CD4-positive, alpha-beta memory T cell (primary cell): ENCODE measurements at regions of chr4 and their contacts with region 1.

Region 1: DNA sequence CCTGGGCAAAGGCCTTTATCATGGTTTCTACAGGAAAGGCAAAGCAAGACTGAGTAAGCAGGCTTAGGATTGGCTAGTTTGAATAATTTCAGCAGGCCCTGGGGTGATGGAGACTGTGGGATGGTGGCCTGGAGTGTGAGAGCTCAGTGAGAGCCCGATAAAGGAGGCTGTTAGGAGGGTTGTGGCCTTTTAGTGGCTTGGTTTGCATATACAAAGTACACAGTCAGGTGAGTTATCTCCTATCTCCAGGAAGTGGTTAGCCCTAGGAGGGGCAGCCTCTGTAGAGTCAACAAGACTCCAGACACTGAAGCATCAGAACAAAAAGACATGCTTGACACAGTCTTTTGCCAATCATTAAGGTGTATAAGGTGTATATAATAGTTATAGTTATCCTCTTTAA is 157.2 kb downstream of the CFAP299 start:
- DNase-seq: peak; percentile 76 to 83 (median 81)
- H3K4me3 ChIP-seq: no peak overlapping the region
- H3K4me3 Mint-ChIP-seq: peak overlapping the region in 7 of 8 donors; percentile 33 to 79 (median 69)
- H3K27ac ChIP-seq: peak overlapping the region; percentile 24
- H3K27ac Mint-ChIP-seq: peak overlapping the region; percentile 82 to 95 (median 92)
- H3K4me1 ChIP-seq: peaks cover 58% of the 10 kb centered on the region
- H3K4me1 Mint-ChIP-seq: peaks cover 45 to 66% (median 56%) of the 10 kb centered on the region in 4 donors
- H3K27me3 ChIP-seq: no peaks in the 10 kb centered on the region
- H3K27me3 Mint-ChIP-seq: no peaks in the 10 kb centered on the region

Region 2: GRCh38 chr4:80422727-80423404 is 69.9 kb before region 1 on chr4:
- CTCF ChIA-PET with region 1: no interaction called
- POLR2A ChIA-PET with region 1: no interaction called
- intact Hi-C with region 1: loop called (anchors 10 kb)
- DNase-seq: peak; percentile 16 to 57 (median 44)
- H3K4me3 ChIP-seq: no peak overlapping the region
- H3K4me3 Mint-ChIP-seq: no peak overlapping the region
- H3K27ac ChIP-seq: no peak overlapping the region
- H3K27ac Mint-ChIP-seq: no peak overlapping the region
- H3K4me1 ChIP-seq: peaks cover 18% of the 10 kb centered on the region
- H3K4me1 Mint-ChIP-seq: peaks cover 12 to 21% (median 17%) of the 10 kb centered on the region in 4 donors
- H3K27me3 ChIP-seq: no peaks in the 10 kb centered on the region
- H3K27me3 Mint-ChIP-seq: no peaks in the 10 kb centered on the region

Region 3: GRCh38 chr4:80434238-80434637 is 58.5 kb before region 1 on chr4:
- CTCF ChIA-PET with region 1: interaction called, 3 read pairs
- POLR2A ChIA-PET with region 1: interaction called, 10 read pairs
- intact Hi-C with region 1: loop called (anchors 10 kb)
- DNase-seq: no peak
- H3K4me3 ChIP-seq: no peak overlapping the region
- H3K4me3 Mint-ChIP-seq: no peak overlapping the region
- H3K27ac ChIP-seq: no peak overlapping the region
- H3K27ac Mint-ChIP-seq: no peak overlapping the region
- H3K4me1 ChIP-seq: peaks cover 13% of the 10 kb centered on the region
- H3K4me1 Mint-ChIP-seq: peaks cover 7 to 23% (median 13%) of the 10 kb centered on the region in 4 donors
- H3K27me3 ChIP-seq: no peaks in the 10 kb centered on the region
- H3K27me3 Mint-ChIP-seq: no peaks in the 10 kb centered on the region